Endothelial cell of umbilical vein (primary cell): ENCODE measurements at regions of chr1 and their contacts with region 1.

Region 1: DNA sequence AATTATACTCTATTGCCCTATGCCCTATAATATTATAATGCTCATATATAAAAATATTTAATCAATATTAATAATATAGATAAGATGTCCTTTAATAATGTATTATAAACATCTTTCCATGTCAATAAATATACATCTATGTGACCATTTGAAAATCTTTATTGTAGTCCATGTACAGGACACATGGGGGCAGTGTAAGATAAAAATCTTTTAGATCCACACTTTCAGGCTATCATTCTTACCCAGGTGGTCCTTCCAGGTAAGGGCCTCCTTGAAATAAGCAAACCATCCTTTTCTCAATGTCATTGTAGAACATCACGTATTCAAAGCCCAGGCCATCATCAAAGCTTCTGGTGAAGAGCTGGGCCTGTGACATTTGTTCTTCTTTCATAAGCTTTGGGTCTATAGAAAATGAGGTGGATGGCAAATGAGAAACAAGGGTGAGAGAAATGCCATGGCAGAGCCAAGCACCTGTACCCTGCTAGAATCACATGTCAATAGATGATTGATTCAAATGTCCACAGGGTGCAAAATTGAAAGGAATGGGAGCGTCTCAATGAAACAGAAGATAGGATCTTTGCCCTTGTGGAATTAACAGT is 20.2 kb downstream of the THEM4 start:
- DNase-seq: peak; percentile 28
- H3K4me3 ChIP-seq: no peak overlapping the region
- H3K27ac ChIP-seq: no peak overlapping the region
- H3K4me1 ChIP-seq: peaks cover 15% of the 10 kb centered on the region
- H3K27me3 ChIP-seq: no peaks in the 10 kb centered on the region
- CTCF ChIP-seq: peak; percentile 20 to 22
- POLR2A ChIP-seq: no peak

Region 2: DNA sequence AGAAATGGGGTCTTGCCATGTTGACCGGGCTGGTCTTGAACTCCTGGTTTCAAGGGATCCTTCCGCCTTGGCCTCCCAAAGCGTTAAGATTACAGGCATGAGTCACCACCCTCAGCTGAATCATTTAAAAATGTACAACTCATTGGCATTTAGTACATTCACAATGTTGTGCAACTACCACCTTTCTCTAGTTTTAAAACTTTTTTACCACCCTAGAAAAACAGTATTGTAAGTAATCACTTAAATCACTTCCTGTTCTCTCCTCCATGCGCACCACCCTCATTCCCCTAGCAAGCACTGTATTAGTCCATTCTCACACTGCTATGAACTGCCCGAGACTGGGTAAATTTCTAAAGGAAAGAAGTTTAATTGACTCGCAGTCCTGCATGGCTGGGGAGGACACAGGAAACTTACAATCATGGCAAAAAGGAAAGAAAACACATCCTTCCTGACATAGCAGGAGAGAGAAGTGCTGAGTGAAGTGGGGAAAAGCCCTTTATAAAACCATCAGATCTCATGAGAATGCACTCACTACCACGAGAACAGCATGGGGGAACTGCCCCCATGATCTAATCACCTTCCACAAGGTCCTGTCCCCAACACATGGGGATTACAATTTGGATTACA is 21.2 kb before region 1 on chr1:
- CTCF ChIA-PET with region 1: no interaction called
- POLR2A ChIA-PET with region 1: no interaction called
- dilution Hi-C with region 1: no loop called
- intact Hi-C with region 1: no loop called
- DNase-seq: peak; percentile 81
- H3K4me3 ChIP-seq: no peak overlapping the region
- H3K27ac ChIP-seq: peak overlapping the region; percentile 36
- H3K4me1 ChIP-seq: peaks cover 16% of the 10 kb centered on the region
- H3K27me3 ChIP-seq: no peaks in the 10 kb centered on the region
- CTCF ChIP-seq: no peak
- POLR2A ChIP-seq: no peak

Region 3: DNA sequence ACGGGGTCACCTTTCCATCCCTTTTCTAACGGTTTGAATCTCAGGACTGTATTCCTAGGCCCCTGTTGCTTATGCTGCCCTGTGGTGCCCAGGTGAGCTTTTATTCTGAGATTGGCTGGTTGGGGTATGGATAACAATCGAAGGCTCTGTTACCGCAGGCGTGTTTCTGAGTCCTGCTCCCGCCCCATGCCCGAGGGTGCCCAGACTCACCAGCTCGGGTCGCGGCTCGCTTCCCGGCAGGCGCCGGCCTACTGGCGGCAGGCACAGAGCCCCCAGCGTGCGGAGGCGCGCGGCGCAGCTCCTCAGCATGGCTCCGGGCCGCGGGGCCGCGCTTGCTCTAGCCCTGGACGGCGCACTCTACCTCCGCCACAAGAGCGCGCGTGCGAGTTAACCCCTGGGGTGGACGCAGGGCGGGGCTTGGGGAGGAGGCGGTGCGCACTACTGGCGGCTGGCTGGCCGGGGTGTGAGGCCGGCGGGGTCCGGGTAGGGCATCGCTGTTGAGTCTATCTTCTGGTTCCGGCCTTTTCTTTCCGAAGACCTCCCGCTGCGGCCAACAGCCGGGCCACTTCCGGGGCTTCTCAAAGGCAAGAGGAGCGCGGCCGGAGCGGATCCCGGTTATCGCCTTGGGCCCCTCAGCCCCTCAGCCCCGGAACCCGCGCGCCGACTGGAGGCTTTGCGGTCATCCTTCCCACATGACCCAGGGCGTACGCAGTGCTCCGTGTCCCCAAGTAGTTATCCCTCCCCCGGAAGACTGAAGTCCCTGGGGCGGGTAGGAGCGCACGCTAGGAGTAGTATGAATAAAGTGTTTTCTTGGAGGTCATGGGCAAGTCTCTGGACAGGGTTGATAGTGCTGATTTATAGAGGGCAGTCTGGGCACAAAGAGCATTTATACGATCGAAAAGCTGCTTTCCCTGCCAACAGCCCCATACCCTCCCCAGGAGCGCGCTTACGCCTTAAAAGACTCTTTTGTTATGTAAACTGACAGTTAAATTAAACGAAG is 20.4 kb after region 1 on chr1 and contains the start of gene THEM4:
- CTCF ChIA-PET with region 1: interaction called, 12 read pairs
- POLR2A ChIA-PET with region 1: no interaction called
- dilution Hi-C with region 1: no loop called
- intact Hi-C with region 1: loop called (anchors 1 kb)
- DNase-seq: peak; percentile 93
- H3K4me3 ChIP-seq: peak within 1 kb of the TSS; percentile 48 to 72 (median 50)
- H3K27ac ChIP-seq: peak within 1 kb of the TSS; percentile 65
- H3K4me1 ChIP-seq: peaks cover 27% of the 10 kb centered on the region
- H3K27me3 ChIP-seq: peaks cover 2 to 7% of the 10 kb centered on the region in 2 experiments
- CTCF ChIP-seq: peak; percentile 25 to 46
- POLR2A ChIP-seq: peak; percentile 87
- total RNA-seq, gene THEM4: 22.1 and 24.9 TPM in 2 replicates

Region 4: GRCh38 chr1:151993654-151994496 is 104.8 kb after region 1 on chr1 and contains the start of gene S100A10:
- CTCF ChIA-PET with region 1: interaction called, 128 read pairs
- POLR2A ChIA-PET with region 1: no interaction called
- dilution Hi-C with region 1: no loop called
- intact Hi-C with region 1: loop called (anchors 1 kb)
- DNase-seq: peak; percentile 67
- H3K4me3 ChIP-seq: peak within 1 kb of the TSS; percentile 22 to 70 (median 67)
- H3K27ac ChIP-seq: peak within 1 kb of the TSS; percentile 83
- H3K4me1 ChIP-seq: peaks cover 44% of the 10 kb centered on the region
- H3K27me3 ChIP-seq: no peaks in the 10 kb centered on the region
- CTCF ChIP-seq: no peak
- POLR2A ChIP-seq: peak; percentile 87
- total RNA-seq, gene S100A10: 650 and 779 TPM in 2 replicates